SK-N-SH (cell line): ENCODE measurements at regions of chr11 and their contacts with region 1.

Region 1: DNA sequence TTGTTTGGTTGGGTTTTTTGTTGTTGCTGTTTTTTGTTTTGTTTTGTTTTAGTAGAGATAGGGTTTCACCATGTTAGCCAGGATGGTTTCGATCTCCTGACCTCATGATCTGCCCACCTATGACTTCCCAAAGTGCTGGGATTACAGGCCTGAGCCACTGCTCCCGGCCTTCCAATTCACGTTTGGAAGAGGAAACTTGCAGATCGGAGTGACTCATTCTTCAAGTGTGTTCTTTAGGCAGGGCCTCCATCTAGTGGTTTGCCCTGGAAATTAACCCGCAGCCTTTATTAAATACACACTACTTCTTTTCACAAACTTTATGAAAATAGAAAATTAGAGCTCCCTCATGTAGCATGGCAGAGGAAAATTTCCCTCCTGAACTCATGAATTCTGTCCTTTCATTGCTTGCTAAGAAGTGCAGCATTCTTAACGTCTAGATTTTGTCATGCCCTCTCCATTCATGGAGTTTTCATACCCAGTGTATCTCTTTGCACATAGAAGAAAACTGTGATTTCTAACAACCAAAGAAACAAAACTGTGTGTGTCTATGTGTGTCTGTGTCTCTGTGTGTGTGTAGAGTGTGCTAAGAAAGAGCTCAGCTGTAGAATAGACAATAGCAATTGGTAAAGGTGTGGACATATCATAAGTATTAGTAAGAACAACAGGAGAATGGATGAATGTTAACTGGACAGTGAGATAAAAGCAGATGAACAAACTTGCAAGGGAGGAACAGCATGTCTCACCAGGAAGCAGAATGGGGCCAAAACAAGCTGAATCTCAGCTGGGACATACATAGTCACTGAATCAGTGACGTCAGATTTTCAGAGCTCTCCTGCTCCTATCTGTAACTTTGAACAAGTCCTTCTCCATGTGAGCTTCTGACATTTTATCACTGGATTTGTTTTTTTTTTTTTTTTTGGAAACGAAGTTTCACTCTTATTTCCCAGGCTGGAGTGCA is 118.4 kb downstream of the BBOX1 start:
- DNase-seq: peak; percentile 62
- H3K4me3 ChIP-seq: no peak overlapping the region
- H3K27ac ChIP-seq: peak overlapping the region in 1 of 2 experiments; percentile 44; a peak in 1 of 4 replicates
- H3K4me1 ChIP-seq: peaks cover 0 to 5% of the 10 kb centered on the region in 2 experiments; a peak in 1 of 4 replicates
- H3K27me3 ChIP-seq: no peaks in the 10 kb centered on the region
- CTCF ChIP-seq: peak; percentile 91
- EP300 ChIP-seq: no peak
- RAD21 ChIP-seq: peak; percentile 94

Region 2: GRCh38 chr11:26297189-26297975 is 861.6 kb before region 1 on chr11:
- CTCF ChIA-PET with region 1: interaction called, 13 read pairs
- POLR2A ChIA-PET with region 1: no interaction called
- DNase-seq: peak; percentile 49
- H3K4me3 ChIP-seq: no peak overlapping the region
- H3K27ac ChIP-seq: no peak overlapping the region
- H3K4me1 ChIP-seq: no peaks in the 10 kb centered on the region
- H3K27me3 ChIP-seq: no peaks in the 10 kb centered on the region
- CTCF ChIP-seq: peak; percentile 88
- EP300 ChIP-seq: no peak
- RAD21 ChIP-seq: peak; percentile 94

Region 3: DNA sequence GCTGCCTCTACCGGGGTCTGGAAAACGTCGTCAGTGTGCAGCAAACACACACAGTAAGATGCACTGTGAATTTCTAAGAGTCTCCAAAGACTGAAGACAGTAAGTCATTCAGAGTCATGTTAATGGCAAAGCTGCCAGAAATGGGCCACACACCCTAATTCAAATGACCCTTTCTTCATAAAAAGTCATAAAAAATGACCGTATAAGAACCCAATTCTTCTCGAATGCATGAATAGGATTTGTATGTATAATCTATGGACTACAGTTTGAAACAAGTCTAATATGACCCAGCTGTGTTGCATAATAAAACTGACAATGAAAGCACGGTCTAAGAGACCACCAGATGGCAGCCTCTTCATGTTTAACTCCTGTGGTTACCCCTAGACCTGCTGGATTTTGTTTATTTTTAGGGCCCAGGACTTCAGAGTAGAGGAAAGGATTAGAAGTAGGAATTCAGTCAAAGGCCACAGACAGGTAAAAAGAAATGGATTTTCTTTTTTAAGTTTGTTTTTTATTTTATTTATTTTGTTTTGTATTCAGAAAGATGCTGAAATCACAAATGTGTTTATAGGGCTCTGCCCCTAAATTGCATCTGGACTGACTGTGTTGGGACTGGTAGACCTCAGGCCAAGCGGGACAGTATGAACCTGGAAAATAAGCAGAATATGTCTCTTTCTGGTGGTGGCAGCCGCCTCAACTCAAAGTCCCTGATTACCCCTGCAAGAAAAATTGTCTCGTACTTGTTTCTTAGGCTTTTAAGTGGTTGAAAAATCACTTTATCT is 405.1 kb before region 1 on chr11:
- CTCF ChIA-PET with region 1: interaction called, 58 read pairs
- POLR2A ChIA-PET with region 1: no interaction called
- DNase-seq: peak; percentile 45
- H3K4me3 ChIP-seq: no peak overlapping the region; a peak in 1 of 4 replicates
- H3K27ac ChIP-seq: no peak overlapping the region
- H3K4me1 ChIP-seq: peaks cover 0 to 3% of the 10 kb centered on the region in 2 experiments; a peak in 1 of 4 replicates
- H3K27me3 ChIP-seq: no peaks in the 10 kb centered on the region
- CTCF ChIP-seq: peak; percentile 94
- EP300 ChIP-seq: no peak
- RAD21 ChIP-seq: peak; percentile 96

Region 4: GRCh38 chr11:26761361-26761809 is 397.6 kb before region 1 on chr11:
- CTCF ChIA-PET with region 1: interaction called, 36 read pairs
- POLR2A ChIA-PET with region 1: no interaction called
- DNase-seq: no peak
- H3K4me3 ChIP-seq: no peak overlapping the region
- H3K27ac ChIP-seq: no peak overlapping the region
- H3K4me1 ChIP-seq: no peaks in the 10 kb centered on the region; a peak in 1 of 4 replicates
- H3K27me3 ChIP-seq: no peaks in the 10 kb centered on the region
- CTCF ChIP-seq: no peak
- EP300 ChIP-seq: no peak
- RAD21 ChIP-seq: no peak

Region 5: GRCh38 chr11:27174021-27174420 is 15.0 kb after region 1 on chr11:
- CTCF ChIA-PET with region 1: interaction called, 11 read pairs
- POLR2A ChIA-PET with region 1: no interaction called
- DNase-seq: no peak
- H3K4me3 ChIP-seq: no peak overlapping the region
- H3K27ac ChIP-seq: no peak overlapping the region
- H3K4me1 ChIP-seq: no peaks in the 10 kb centered on the region
- H3K27me3 ChIP-seq: no peaks in the 10 kb centered on the region
- CTCF ChIP-seq: no peak
- EP300 ChIP-seq: no peak
- RAD21 ChIP-seq: no peak